ENCODE measurements at regions of chrX and their contacts with region 1.

Region 1: GRCh38 chrX:65674204-65674893 is 6.9 kb downstream of the MSN start:
- DNase-seq: peak; percentile 34
- ATAC-seq: peak; percentile 44
- H3K4me3 Mint-ChIP-seq: peak overlapping the region; percentile 95
- H3K27ac Mint-ChIP-seq: peak overlapping the region; percentile 94
- H3K4me1 Mint-ChIP-seq: peaks cover 61% of the 10 kb centered on the region
- H3K27me3 Mint-ChIP-seq: no peaks in the 10 kb centered on the region
- CTCF ChIP-seq: no peak

Region 2: GRCh38 chrX:65578346-65578745 is 96.0 kb before region 1 on chrX:
- CTCF ChIA-PET with region 1: no interaction called
- POLR2A ChIA-PET with region 1: no interaction called
- intact Hi-C with region 1: no loop called
- DNase-seq: no peak
- ATAC-seq: no peak
- H3K4me3 Mint-ChIP-seq: no peak overlapping the region
- H3K27ac Mint-ChIP-seq: no peak overlapping the region
- H3K4me1 Mint-ChIP-seq: peaks cover 7% of the 10 kb centered on the region
- H3K27me3 Mint-ChIP-seq: no peaks in the 10 kb centered on the region
- CTCF ChIP-seq: no peak

Region 3: GRCh38 chrX:65688403-65688871 is 14.1 kb after region 1 on chrX:
- CTCF ChIA-PET with region 1: interaction called, 25 read pairs
- POLR2A ChIA-PET with region 1: interaction called, 10 read pairs
- intact Hi-C with region 1: no loop called
- DNase-seq: no peak
- ATAC-seq: peak; percentile 46
- H3K4me3 Mint-ChIP-seq: no peak overlapping the region
- H3K27ac Mint-ChIP-seq: peak overlapping the region; percentile 89
- H3K4me1 Mint-ChIP-seq: peaks cover 77% of the 10 kb centered on the region
- H3K27me3 Mint-ChIP-seq: no peaks in the 10 kb centered on the region
- CTCF ChIP-seq: no peak

Region 4: DNA sequence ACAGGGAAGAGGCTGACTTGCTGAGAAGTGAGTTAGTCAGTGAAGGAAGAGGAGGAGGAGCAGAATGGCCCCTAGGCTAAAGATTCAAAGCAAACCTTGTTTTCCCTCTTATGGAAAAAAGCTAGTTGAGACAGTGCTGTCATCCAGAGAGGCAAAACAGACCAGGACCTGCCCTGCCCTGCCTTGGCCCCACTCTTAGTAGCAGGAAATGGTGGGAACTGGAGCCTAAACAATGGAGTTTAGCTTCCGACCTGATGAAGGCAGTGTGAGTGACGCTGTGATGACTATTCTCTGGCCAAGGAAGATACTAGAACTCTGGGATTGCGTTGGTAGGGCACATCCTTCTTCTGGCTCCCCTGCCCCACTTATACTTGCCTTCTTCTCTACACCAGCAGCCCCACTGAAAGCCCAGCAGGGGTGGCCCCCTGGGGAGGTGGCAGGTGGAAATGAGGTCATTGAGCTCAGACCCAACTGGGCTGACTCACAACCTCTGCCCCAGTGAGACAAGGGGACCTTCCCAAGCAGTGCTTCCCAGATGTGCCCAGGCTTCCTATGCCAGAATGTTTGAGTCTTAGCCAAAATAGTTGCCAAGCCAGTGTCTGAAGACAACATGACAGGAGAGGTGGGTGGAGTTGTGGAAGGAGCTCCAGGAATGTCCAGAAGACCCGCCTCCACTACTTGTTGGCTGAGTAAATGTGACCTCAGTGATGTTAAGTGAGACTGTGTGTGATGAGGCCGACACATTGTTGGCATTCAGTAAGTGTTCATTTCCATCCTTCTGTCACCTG is 31.9 kb after region 1 on chrX:
- CTCF ChIA-PET with region 1: no interaction called
- POLR2A ChIA-PET with region 1: interaction called, 10 read pairs
- intact Hi-C with region 1: no loop called
- DNase-seq: peak; percentile 79
- ATAC-seq: peak; percentile 89
- H3K4me3 Mint-ChIP-seq: peak overlapping the region; percentile 36
- H3K27ac Mint-ChIP-seq: peak overlapping the region; percentile 97
- H3K4me1 Mint-ChIP-seq: peaks cover 65% of the 10 kb centered on the region
- H3K27me3 Mint-ChIP-seq: no peaks in the 10 kb centered on the region
- CTCF ChIP-seq: no peak

Region 5: DNA sequence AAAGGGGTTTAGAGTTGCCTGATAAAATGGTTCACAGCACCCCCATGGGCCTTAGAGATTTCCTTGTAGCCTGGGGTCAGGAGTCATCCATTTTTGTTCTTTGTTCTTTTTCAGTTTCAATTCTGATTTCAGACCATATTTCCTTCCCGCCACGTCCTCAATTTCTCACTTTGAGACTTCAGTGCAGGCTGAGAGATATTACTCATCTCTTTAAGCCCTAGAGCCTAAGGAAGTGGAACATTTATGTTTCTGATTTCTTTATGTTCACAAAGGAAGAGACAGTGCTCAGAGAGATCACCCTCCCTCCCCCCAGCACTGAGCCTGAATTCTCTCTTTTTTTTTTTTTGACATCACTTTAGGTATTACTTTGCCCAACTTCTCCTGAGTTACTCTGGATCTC is 49.4 kb after region 1 on chrX:
- CTCF ChIA-PET with region 1: interaction called, 4 read pairs
- POLR2A ChIA-PET with region 1: interaction called, 4 read pairs
- intact Hi-C with region 1: loop called (anchors 5 kb)
- DNase-seq: peak; percentile 63
- ATAC-seq: peak; percentile 88
- H3K4me3 Mint-ChIP-seq: peak overlapping the region; percentile 38
- H3K27ac Mint-ChIP-seq: peak overlapping the region; percentile 94
- H3K4me1 Mint-ChIP-seq: peaks cover 86% of the 10 kb centered on the region
- H3K27me3 Mint-ChIP-seq: no peaks in the 10 kb centered on the region
- CTCF ChIP-seq: no peak

Measured in activated CD8-positive, alpha-beta T cell treated with anti-CD3 and anti-CD28 coated beads for 36 hours (primary cell).